ENCODE measurements at regions of chr9 and their contacts with region 1.

Region 1: GRCh38 chr9:76302947-76303940 is 91.0 kb downstream of the RFK start:
- DNase-seq: no peak
- H3K4me3 Mint-ChIP-seq: no peak overlapping the region
- H3K27ac Mint-ChIP-seq: no peak overlapping the region
- H3K4me1 Mint-ChIP-seq: no peaks in the 10 kb centered on the region
- H3K27me3 Mint-ChIP-seq: peaks cover 5% of the 10 kb centered on the region

Region 2: DNA sequence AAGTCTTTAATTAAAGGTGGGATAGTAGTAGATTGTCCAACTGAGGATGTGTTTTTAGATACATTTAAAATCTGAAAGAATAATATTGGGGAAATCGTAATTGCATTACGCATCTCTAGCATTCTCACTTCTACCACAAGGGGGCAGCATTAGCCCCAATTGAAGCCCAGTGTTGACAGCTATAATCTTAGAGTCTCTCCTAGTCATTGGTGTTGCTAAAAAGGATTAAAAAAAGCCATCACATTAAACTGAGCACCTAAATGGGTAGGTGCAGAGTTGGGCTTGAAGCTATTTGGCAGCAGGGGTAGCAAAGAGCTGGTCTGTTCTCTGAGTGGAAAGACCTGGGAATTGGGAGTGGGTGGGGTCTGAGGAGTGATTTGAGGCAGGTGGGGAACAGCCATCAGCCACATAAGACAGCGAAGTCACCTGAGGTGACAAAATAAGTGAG is 1037.7 kb before region 1 on chr9:
- CTCF ChIA-PET with region 1: interaction called, 10 read pairs
- POLR2A ChIA-PET with region 1: no interaction called
- DNase-seq: peak; percentile 46
- H3K4me3 Mint-ChIP-seq: no peak overlapping the region
- H3K27ac Mint-ChIP-seq: no peak overlapping the region
- H3K4me1 Mint-ChIP-seq: no peaks in the 10 kb centered on the region
- H3K27me3 Mint-ChIP-seq: no peaks in the 10 kb centered on the region

Region 3: DNA sequence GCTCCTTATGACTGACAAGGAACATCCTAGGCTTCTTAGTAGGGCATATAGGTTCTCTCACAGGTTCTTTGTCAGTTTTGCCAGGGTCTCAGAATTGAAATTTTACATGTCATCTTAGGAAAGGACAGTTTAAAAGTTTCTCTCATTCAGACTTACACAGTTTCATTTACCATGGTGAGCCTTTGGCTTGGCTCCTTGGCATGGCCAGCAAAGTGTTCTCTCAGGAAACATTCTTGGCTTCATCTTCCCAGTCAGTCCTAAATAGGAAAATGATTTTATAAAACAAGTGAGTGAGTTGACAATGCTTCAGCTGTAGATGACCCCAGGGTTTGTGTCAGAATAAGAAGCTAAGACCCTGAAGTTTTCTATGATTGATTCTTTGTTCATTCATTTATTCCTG is 221.2 kb before region 1 on chr9:
- CTCF ChIA-PET with region 1: no interaction called
- POLR2A ChIA-PET with region 1: no interaction called
- DNase-seq: no peak
- H3K4me3 Mint-ChIP-seq: no peak overlapping the region
- H3K27ac Mint-ChIP-seq: no peak overlapping the region
- H3K4me1 Mint-ChIP-seq: no peaks in the 10 kb centered on the region
- H3K27me3 Mint-ChIP-seq: no peaks in the 10 kb centered on the region

Region 4: GRCh38 chr9:76292246-76292645 is 11.0 kb before region 1 on chr9:
- CTCF ChIA-PET with region 1: interaction called, 34 read pairs
- POLR2A ChIA-PET with region 1: no interaction called
- DNase-seq: no peak
- H3K4me3 Mint-ChIP-seq: no peak overlapping the region
- H3K27ac Mint-ChIP-seq: no peak overlapping the region
- H3K4me1 Mint-ChIP-seq: no peaks in the 10 kb centered on the region
- H3K27me3 Mint-ChIP-seq: no peaks in the 10 kb centered on the region